ENCODE measurements at regions of chr22 and their contacts with region 1.

Region 1: GRCh38 chr22:25202290-25202921 is 2.7 kb downstream of the CRYBB3 start:
- DNase-seq: peak; percentile 16 to 68 (median 41)
- ATAC-seq: peak; percentile 61
- H3K4me3 ChIP-seq: no peak overlapping the region
- H3K4me3 Mint-ChIP-seq: no peak overlapping the region
- H3K27ac ChIP-seq: no peak overlapping the region
- H3K27ac Mint-ChIP-seq: no peak overlapping the region
- H3K4me1 ChIP-seq: no peaks in the 10 kb centered on the region
- H3K4me1 Mint-ChIP-seq: no peaks in the 10 kb centered on the region
- H3K27me3 ChIP-seq: no peaks in the 10 kb centered on the region
- H3K27me3 Mint-ChIP-seq: no peaks in the 10 kb centered on the region
- CTCF ChIP-seq: peak; percentile 90

Region 2: DNA sequence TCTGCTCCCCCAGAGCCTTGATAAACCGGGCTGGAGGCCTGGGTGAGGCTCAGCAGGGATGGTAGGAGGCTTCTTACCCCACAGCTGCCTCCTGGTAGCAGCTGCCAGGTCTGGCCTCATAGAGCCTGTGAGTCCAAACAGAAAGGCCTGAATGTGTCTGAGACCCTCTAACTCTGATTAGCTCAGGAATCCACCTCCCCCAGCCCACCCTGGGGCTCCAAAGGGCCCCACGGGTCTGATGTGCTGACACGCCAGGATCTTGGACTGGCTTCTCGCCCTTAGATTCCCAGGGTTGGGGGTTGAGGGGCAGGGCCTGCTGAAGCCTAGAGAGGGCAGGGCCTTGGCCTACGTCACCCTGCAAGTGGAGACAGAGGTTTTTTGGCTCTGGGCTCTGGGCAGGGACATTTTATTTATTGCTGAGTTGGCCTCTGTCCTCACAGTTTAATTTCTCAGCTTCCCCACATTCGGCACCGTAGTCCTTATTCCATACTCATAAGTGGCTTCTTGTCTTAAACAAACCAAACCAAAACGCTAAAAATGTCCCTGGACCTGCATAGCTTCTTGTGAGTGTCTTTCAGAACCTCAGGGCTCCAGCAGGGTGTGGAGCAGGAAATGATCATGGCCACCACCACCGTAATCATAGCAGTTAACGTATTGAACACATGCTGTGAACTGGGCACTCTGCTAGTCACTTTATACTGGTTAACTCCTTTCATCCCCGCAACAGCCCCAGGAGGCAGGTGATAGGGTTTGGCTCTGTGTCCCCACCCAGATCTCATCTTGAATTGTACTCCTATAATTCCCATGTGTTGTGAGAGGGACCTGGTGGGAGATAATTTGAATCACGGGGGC is 224.8 kb before region 1 on chr22:
- CTCF ChIA-PET with region 1: no interaction called
- POLR2A ChIA-PET with region 1: no interaction called
- intact Hi-C with region 1: no loop called
- DNase-seq: no peak
- ATAC-seq: no peak
- H3K4me3 ChIP-seq: no peak overlapping the region
- H3K4me3 Mint-ChIP-seq: no peak overlapping the region
- H3K27ac ChIP-seq: no peak overlapping the region
- H3K27ac Mint-ChIP-seq: no peak overlapping the region
- H3K4me1 ChIP-seq: no peaks in the 10 kb centered on the region
- H3K4me1 Mint-ChIP-seq: no peaks in the 10 kb centered on the region
- H3K27me3 ChIP-seq: no peaks in the 10 kb centered on the region
- H3K27me3 Mint-ChIP-seq: no peaks in the 10 kb centered on the region
- CTCF ChIP-seq: no peak

Region 3: GRCh38 chr22:26364066-26365015 is 1161.9 kb after region 1 on chr22:
- CTCF ChIA-PET with region 1: no interaction called
- POLR2A ChIA-PET with region 1: no interaction called
- intact Hi-C with region 1: loop called in 1 of 2 experiments (anchors 5 kb)
- DNase-seq: peak; percentile 18 to 80 (median 34)
- ATAC-seq: peak; percentile 81
- H3K4me3 ChIP-seq: no peak overlapping the region
- H3K4me3 Mint-ChIP-seq: no peak overlapping the region
- H3K27ac ChIP-seq: no peak overlapping the region
- H3K27ac Mint-ChIP-seq: no peak overlapping the region
- H3K4me1 ChIP-seq: peaks cover 8% of the 10 kb centered on the region
- H3K4me1 Mint-ChIP-seq: peaks cover 6% of the 10 kb centered on the region
- H3K27me3 ChIP-seq: peaks cover 0 to 11% of the 10 kb centered on the region in 2 experiments
- H3K27me3 Mint-ChIP-seq: peaks cover 31% of the 10 kb centered on the region
- CTCF ChIP-seq: peak; percentile 60

Measured in CD4-positive, alpha-beta T cell (primary cell).